ENCODE measurements at regions of chr11 and their contacts with region 1.

Region 1: GRCh38 chr11:9613118-9613829 is 39.8 kb downstream of the WEE1 start:
- DNase-seq: peak; percentile 96
- ATAC-seq: peak; percentile 80
- H3K4me3 ChIP-seq: peak overlapping the region; percentile 63
- H3K27ac ChIP-seq: peak overlapping the region; percentile 86
- H3K4me1 ChIP-seq: peaks cover 26% of the 10 kb centered on the region
- H3K27me3 ChIP-seq: no peaks in the 10 kb centered on the region
- CTCF ChIP-seq: peak; percentile 91

Region 2: DNA sequence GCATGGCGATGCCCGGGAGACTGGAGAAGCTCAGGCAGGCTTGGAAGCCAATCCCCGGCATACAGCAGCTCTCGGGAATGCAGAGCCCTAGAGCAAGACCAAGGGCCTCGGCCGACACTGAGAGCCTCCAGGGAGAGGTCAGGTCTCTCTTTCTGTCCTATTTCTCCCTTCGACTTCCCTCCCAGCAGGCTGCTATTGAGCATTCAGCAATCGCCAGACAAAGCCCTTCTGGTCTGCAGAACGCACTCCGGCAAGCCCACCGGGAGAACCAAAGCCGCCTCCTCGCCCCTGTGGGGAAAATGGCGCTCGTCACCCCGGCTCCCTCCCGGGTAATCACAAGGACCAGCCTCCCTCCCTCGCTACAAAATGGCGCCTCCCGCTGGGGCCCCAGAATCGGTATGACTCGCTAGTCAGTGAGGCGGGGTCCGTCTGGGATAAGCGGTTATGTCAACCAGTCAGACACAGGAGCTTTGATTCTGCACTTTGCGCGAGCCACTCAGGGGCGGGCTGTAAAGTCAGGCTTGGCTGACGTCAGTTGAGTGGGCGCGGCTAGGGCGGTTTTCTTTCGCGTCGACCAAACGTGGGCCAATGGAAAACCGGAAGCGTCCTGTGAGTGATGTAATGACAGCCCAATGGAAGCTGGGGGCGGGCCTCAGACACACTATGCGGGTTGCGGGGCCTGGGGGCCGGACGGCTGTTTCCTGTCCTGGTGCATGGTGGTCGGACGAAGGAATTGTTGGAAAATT is 152.8 kb before region 1 on chr11 and contains the start of gene ZNF143:
- CTCF ChIA-PET with region 1: no interaction called
- POLR2A ChIA-PET with region 1: no interaction called
- intact Hi-C with region 1: loop called (anchors 1 kb)
- DNase-seq: peak; percentile 99
- ATAC-seq: peak; percentile 89
- H3K4me3 ChIP-seq: peak within 1 kb of the TSS; percentile 81
- H3K27ac ChIP-seq: peak within 1 kb of the TSS; percentile 98
- H3K4me1 ChIP-seq: peaks cover 18% of the 10 kb centered on the region
- H3K27me3 ChIP-seq: no peaks in the 10 kb centered on the region
- CTCF ChIP-seq: no peak
- total RNA-seq, gene ZNF143: 21.8 and 33.9 TPM in 2 replicates

Region 3: DNA sequence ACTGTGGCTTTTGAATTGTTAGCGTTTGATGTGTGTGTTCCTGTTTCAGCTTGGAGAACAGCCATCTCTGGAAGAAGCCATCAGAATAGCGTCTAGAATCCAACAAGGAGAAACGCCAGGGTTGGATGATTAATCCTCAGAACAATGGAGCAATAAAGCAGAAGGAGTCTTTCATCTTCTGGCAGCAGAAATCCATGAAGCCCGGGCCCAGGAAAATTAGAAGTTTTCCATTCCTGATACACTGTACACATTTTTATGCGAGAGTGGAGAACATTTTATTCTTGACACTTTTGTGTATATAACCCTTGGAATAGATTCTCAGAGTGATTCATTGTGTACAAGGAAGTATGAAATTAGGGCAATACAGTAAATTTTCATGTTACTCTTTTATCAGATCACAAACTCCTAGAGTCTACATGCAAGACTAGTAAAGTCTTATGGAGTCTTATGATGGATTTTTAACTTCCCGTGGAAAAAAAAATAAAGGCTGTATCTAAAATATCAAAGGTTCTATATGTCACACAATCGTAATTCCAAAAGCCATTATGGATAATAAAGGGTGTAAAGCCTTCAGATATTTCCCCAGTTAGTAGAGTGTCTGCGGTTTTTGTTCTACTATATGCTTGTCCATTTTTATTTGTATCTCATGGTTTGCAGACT is 85.7 kb before region 1 on chr11:
- CTCF ChIA-PET with region 1: interaction called, 3 read pairs
- POLR2A ChIA-PET with region 1: no interaction called
- intact Hi-C with region 1: loop called (anchors 1 kb)
- DNase-seq: peak; percentile 74
- ATAC-seq: peak; percentile 83
- H3K4me3 ChIP-seq: peak overlapping the region; percentile 1; the same call in 1 of the 2 replicates
- H3K27ac ChIP-seq: peak overlapping the region; percentile 79
- H3K4me1 ChIP-seq: peaks cover 36% of the 10 kb centered on the region
- H3K27me3 ChIP-seq: no peaks in the 10 kb centered on the region
- CTCF ChIP-seq: no peak

Region 4: DNA sequence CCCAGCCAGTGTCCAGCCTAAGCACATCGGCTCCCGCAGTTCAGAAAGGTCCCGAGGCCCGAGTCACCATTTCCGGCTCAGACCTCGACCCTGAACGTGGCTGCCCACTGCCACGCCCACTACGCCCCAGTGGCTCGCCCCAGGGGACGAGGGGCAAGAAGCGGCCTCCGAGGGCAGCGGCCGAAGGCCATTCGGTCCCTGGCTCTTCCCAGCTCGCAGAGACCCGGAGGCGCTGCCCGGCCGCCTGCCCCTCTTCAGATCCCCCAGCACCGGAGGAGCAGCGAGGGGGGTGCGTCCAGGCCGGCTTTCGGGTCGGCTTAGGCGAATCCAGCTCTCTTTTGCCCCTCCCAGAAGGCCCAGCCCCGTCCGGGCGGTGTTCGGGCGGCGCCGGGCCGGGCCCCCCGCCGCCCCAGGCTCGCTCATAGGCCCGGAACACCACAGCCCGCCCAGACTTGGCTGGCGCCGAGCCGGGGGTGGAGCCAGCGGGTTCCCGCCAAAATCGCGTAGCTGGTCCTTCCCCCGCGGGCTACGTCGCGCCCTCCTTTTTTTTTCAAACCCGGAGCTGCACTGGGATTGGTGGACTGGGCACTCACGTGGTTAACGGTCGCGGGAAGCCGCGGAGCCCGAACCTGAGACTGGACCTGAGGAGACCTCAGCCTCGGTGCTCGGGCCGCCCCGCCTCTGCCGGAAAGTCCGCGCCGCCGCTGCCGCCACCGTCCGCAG is 40.1 kb before region 1 on chr11 and contains the start of gene WEE1:
- CTCF ChIA-PET with region 1: interaction called, 5 read pairs
- POLR2A ChIA-PET with region 1: interaction called, 4 read pairs
- intact Hi-C with region 1: loop called (anchors 1 kb)
- DNase-seq: peak; percentile 98
- ATAC-seq: peak; percentile 80
- H3K4me3 ChIP-seq: peak within 1 kb of the TSS; percentile 84
- H3K27ac ChIP-seq: peak within 1 kb of the TSS; percentile 90
- H3K4me1 ChIP-seq: peaks cover 48% of the 10 kb centered on the region
- H3K27me3 ChIP-seq: no peaks in the 10 kb centered on the region
- CTCF ChIP-seq: no peak
- total RNA-seq, gene WEE1: 45.1 and 46.9 TPM in 2 replicates

Region 5: GRCh38 chr11:9748361-9748970 is 135.2 kb after region 1 on chr11:
- CTCF ChIA-PET with region 1: interaction called, 9 read pairs
- POLR2A ChIA-PET with region 1: no interaction called
- intact Hi-C with region 1: loop called (anchors 1 kb)
- DNase-seq: peak; percentile 80
- ATAC-seq: peak; percentile 94
- H3K4me3 ChIP-seq: no peak overlapping the region
- H3K27ac ChIP-seq: no peak overlapping the region
- H3K4me1 ChIP-seq: peaks cover 21% of the 10 kb centered on the region
- H3K27me3 ChIP-seq: no peaks in the 10 kb centered on the region
- CTCF ChIP-seq: peak; percentile 92